Cardiac septum (tissue), 1 donor: ENCODE measurements at regions of chr12 and their contacts with region 1.

Region 1: DNA sequence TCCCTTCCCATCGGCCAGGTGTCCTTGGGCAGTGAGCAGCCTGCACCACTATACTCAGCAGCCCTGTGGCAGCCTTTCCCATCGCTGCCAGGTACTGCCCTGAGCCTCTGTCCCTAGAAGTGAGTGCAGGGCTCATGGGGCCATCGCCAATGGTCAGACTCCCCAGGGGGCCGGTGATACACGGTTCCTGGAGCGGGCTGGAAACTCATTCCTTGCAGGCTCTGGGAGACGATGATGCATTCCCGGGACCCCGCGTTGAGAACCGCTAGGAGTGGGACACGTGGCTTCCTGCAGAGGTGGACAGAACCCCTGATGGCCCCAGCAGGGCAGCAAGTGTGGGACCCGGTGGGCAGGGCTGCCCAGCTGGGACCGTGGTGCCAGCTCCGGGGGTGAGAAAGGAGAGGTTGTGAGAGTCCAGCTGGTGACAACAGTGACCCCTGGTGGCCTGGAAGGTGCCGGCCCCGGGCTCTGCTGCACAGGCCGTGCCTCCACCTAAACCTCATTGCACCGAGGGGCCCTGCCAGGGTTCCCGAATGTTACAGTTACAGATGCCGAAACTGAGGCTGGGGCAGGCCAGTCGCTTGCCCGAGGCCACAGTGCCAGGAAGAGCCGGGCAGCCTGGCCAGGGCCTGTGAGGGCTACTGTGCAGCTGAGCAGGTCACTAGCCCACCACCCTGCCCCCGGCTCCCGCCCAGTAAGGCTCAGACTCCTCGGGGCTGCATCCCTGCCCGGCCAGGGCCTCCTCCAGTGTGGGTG is 33.8 kb downstream of the FBRSL1 start:
- DNase-seq: peak; percentile 87

Region 2: GRCh38 chr12:132414634-132415326 is 109.0 kb before region 1 on chr12:
- intact Hi-C with region 1: loop called (anchors 2 kb)
- DNase-seq: peak; percentile 89

Region 3: DNA sequence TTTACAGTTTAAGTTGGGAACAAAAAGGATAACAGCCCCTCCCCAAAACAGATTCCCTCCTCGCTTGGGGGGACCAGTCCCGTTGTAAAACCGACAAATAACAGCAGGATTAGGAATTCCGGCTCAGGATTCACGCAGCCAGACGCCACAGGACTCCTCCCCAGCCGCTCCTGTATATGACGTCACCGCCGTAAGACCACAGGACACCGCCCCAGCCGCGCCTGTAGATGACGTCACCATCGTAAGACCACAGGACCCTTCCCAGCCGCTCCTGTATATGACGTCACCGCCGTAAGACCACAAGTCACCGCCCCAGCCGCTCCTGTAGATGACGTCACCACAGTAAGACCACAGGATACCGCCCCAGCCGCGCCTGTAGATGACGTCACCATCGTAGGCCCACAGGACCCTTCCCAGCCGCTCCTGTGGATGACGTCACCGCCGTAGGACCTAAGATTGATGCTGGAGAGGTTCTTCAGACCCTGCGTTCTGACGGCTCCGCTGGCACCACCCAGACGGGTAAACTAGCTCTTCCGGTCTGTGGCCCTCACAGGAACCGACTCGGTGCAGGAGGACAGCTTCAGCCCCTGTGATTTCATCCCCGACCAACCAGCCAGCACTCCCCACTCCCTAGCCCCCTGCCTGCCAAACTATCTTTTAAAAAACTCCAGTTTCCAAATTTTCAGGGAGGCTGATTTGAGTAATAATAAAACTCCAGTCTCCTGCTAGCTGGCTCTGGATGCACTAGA is 77.7 kb before region 1 on chr12:
- intact Hi-C with region 1: no loop called
- DNase-seq: no peak

Region 4: DNA sequence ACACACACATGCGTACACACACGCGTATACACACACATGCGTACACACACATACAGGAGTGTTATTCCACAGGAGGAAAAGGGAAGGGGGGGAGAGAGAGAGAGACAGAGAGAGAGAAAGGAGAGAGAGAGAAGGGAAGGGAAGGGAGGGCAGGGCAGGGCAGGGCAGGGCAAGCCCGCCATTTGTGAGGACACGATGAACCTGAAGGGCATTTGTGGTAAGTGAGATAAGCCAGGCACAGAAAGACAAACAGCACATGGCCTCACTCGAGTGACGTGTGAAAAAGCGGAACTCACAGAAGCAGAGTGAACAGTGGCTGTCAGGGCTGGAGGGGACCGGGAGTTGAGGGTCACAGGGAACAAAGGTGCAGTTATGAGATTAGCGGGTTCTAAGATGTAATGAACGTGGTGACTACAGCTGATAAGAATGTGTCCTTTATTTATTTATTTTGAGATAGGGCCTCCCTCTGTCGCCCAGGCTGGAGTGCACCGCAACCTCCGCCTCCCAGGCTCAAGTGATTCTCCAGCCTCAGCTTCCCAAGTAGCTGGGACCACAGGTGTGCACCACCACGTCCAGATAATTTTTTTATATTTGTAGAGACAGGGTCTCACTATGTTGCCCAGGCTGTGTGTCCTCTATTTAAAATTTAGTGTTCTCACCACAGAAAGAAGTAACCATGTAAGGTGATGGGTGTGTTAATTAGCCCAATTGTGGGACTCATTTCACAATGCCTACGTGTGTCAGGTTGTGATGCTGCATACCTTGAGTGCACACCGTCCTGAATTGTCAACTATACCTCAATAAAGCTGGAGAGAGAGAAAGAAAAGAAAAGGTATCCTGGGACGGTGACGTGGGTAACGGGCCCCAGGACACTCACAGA is 52.5 kb before region 1 on chr12:
- intact Hi-C with region 1: no loop called
- DNase-seq: no peak